ENCODE measurements at regions of chr16 and their contacts with region 1.

Region 1: GRCh38 chr16:29961479-29962343 is at the start of gene TMEM219:
- DNase-seq: peak; percentile 64
- ATAC-seq: peak; percentile 97
- H3K4me3 ChIP-seq: peak within 1 kb of the TSS; percentile 69 to 72
- H3K27ac ChIP-seq: peak within 1 kb of the TSS; percentile 94
- H3K4me1 ChIP-seq: peaks cover 15% of the 10 kb centered on the region
- H3K27me3 ChIP-seq: no peaks in the 10 kb centered on the region
- CTCF ChIP-seq: no peak
- total RNA-seq, gene TMEM219: 161 TPM

Region 2: GRCh38 chr16:29891525-29892457 is 69.9 kb before region 1 on chr16:
- CTCF ChIA-PET with region 1: no interaction called
- POLR2A ChIA-PET with region 1: interaction called, 14 read pairs
- in situ Hi-C with region 1: no loop called
- intact Hi-C with region 1: no loop called
- DNase-seq: no peak
- ATAC-seq: no peak
- H3K4me3 ChIP-seq: no peak overlapping the region
- H3K27ac ChIP-seq: no peak overlapping the region
- H3K4me1 ChIP-seq: no peaks in the 10 kb centered on the region
- H3K27me3 ChIP-seq: no peaks in the 10 kb centered on the region
- CTCF ChIP-seq: no peak

Region 3: DNA sequence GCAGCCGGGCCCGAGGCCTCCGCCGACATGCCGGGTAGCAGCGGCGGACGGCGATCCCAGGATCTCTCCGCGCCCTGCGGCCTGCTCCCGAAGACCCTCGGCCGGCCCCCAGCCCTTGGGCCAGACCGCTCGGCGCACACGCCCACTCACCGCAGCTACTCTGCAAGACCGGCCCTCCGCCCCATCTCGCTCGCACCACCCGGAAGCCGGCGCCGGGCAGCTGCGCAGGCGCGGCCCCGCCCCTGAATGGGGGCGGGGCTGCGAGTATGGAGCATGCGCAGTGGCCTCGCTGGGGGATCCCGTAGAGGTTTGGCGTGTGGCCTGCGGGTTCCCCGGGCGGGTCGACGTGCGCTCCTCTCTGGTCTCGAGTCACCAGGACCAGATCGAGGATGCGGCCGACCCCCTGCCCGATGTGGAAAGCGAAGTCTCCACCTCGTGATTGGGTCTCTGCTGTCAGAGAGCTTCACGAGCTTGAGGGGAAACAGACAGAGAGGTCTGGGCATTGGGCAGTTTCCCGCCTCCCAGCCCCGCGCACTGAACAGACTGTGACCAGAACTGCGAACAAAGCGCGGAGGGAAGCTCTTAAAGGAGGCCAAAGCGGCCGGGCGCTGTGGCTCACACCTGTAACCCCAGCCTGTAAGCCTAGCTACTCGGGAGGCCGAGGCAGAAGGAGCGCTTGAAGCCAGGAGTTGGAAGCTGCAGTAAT is 35.6 kb before region 1 on chr16 and contains the start of gene KCTD13:
- CTCF ChIA-PET with region 1: no interaction called
- POLR2A ChIA-PET with region 1: interaction called, 12 read pairs
- in situ Hi-C with region 1: no loop called
- intact Hi-C with region 1: no loop called
- DNase-seq: no peak
- ATAC-seq: peak; percentile 97
- H3K4me3 ChIP-seq: peak within 1 kb of the TSS; percentile 59 to 88
- H3K27ac ChIP-seq: peak within 1 kb of the TSS; percentile 97
- H3K4me1 ChIP-seq: peaks cover 14% of the 10 kb centered on the region
- H3K27me3 ChIP-seq: no peaks in the 10 kb centered on the region
- CTCF ChIP-seq: no peak
- total RNA-seq, gene KCTD13: 45.7 TPM

Region 4: DNA sequence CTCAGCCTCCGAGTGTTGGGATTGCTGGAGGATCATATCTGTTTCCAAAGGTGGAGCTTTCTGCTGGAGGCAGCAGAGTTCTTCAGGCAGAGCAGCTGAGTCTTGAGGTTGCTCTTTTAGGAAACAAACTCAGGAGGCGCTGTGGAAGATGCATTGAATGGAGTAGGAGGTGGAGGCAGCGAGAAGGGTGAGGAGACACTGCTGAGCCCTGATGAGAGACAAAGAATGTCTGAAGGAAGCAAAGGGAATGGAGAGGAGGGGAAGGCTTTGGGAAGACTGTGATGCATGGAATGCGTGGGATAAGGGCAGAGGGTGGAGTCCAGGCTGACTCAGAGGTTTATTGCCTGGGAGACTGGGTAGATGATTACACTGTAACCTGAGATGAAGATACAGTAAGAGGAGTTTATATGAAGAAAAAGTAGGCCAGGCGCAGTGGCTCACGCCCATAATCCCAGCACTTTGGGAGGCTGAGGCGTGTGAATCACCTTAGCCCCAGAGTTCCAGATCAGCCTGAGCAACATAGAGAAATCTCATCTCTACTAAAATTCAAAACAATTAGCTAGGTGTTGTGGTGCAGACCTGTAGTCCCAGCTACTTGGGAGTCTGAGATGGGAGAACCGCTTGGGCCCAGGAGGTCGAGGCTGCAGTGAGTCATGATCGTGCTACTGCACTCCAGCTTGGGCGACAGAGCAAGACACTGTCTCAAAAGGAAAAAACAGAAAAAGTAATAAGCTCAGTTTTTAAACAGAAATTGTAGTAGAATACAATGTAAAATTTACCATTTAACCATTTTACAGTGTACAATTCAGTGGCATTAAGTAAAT is 17.7 kb before region 1 on chr16:
- CTCF ChIA-PET with region 1: no interaction called
- POLR2A ChIA-PET with region 1: interaction called, 5 read pairs
- in situ Hi-C with region 1: no loop called
- intact Hi-C with region 1: loop called (anchors 2 kb)
- DNase-seq: peak; percentile 98
- ATAC-seq: peak; percentile 99
- H3K4me3 ChIP-seq: peak overlapping the region; percentile 23 to 53
- H3K27ac ChIP-seq: peak overlapping the region; percentile 99
- H3K4me1 ChIP-seq: peaks cover 17% of the 10 kb centered on the region
- H3K27me3 ChIP-seq: no peaks in the 10 kb centered on the region
- CTCF ChIP-seq: no peak